ENCODE measurements at regions of chr3 and their contacts with region 1.

Region 1: DNA sequence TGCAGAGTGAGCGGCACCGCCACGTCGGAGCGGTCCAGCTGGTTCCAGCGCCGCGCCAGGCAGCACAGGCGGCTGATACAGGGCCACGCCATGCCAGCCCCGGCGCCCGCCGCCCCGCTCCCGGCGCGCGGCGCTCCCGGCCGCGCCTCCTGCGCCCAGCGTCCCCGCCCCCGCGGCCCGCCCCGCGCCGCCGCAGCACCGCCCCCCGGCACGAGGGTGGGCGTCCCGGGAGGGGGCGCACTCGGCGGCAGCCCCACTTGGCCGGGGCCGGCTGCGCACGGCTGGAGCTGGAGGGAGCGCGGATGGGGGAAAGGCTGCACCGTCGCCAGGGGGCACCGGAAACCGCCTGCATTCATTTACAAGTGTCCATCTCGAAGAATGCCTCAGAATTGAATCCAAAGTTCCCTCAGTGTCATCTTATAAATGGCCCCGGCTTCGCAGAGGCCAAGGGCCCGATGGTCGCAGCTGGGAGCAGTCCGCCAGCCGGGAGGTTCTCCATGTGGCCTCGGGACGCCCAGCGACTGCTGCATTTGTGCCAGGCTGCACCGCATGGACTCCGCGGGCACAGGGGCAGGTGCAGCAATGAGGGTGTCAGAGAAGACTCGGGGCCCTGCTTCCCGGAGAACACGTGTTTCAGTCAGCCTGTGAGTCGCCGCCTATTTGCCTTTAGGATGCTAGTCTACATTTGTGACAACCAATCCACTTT is at the start of gene MAP6D1:
- DNase-seq: peak; percentile 37 to 70
- ATAC-seq: peak; percentile 45 to 63 (median 56)
- H3K4me3 ChIP-seq: peak within 1 kb of the TSS; percentile 86
- H3K27ac ChIP-seq: peak within 1 kb of the TSS; percentile 85
- H3K4me1 ChIP-seq: peaks cover 24% of the 10 kb centered on the region
- H3K27me3 ChIP-seq: no peaks in the 10 kb centered on the region
- CTCF ChIP-seq: peak; percentile 31
- total RNA-seq, gene MAP6D1: 4.6 to 12.3 (median 6.2) TPM

Region 2: DNA sequence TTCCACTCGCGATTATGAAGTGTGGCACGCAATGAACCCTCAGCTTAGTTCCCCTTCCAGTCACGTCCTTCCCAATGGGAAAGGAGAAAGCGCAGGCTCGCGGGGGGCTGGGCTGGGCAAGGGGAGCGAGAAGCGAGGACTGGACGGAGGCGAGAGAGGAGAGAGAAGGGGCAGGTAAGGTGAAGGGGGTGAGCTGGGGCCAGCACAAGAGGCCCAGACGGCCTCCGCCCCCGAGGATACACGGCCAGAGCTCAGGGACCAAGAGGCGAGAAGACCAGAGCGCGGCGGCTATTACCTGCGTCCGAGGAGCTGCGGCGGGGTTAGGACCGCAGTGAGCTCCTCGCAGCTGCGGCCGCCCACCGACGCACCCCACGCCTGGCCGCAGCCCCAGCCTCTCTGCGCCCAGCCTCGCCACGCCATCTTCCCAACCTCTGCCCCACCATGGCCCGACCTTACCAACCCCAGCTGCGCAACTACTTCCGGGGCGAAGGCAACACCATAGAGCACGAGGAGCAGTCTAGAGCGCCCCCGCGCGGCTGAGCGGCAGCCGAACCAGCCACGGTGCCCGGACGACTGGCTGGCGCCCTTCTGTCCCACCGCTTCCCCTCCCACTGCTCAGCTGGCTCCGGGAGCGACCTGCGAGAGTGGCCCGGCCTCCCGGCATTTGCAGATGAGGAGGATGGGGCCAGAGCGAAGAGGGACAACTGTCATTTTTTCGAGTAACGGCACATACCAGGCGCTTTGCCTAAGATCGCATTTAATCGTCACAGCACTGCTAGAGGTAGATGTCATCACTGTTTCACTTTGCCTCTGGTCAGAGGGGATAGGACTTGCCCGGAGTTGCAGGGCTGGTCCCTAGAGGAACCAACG is 59.1 kb after region 1 on chr3 and contains the start of gene PARL:
- intact Hi-C with region 1: loop called in 1 of 2 experiments (anchors 5 kb)
- DNase-seq: peak; percentile 97 to 99
- ATAC-seq: peak; percentile 100
- H3K4me3 ChIP-seq: peak within 1 kb of the TSS; percentile 91
- H3K27ac ChIP-seq: peak within 1 kb of the TSS; percentile 82
- H3K4me1 ChIP-seq: peaks cover 18% of the 10 kb centered on the region
- H3K27me3 ChIP-seq: no peaks in the 10 kb centered on the region
- CTCF ChIP-seq: peak; percentile 93
- total RNA-seq, gene PARL: 30.3 to 64.4 (median 50.7) TPM

Region 3: DNA sequence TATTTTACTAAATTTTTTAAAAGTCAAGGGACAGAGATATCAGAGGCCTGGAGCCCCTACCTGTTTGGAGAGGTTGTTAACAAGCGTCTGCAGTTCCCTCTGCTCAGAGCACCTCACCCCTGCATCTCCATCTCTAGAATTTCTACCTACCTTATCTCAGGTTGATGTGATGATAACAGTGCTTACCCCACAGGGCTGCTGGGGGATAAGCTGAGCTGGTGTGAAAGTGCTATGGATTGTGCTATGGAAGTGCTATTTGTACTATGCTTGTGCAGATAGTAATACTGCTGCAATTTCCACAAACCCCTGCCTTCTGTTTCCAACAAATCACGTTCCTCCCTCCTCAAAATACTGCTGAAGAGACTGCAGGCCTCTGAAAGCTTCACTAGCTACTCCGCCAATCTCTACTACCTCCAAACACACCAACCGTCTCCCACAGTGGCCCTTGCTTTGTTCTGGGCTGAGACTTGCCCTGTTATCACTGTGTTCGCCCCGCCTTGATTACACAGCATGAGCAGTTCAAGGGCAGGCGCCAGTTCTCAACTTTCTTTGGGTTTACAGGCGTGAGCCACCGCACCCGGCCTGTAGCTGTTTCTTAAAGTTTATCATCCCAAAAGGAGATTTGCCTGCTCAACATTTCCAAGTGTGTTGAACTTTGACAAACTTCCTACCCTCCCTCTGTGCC is 87.4 kb after region 1 on chr3:
- intact Hi-C with region 1: no loop called
- DNase-seq: no peak
- ATAC-seq: no peak
- H3K4me3 ChIP-seq: no peak overlapping the region
- H3K27ac ChIP-seq: no peak overlapping the region
- H3K4me1 ChIP-seq: no peaks in the 10 kb centered on the region
- H3K27me3 ChIP-seq: no peaks in the 10 kb centered on the region
- CTCF ChIP-seq: no peak

Measured in psoas muscle (tissue), 8 donors.